ENCODE measurements at regions of chr9 and their contacts with region 1.

Region 1: DNA sequence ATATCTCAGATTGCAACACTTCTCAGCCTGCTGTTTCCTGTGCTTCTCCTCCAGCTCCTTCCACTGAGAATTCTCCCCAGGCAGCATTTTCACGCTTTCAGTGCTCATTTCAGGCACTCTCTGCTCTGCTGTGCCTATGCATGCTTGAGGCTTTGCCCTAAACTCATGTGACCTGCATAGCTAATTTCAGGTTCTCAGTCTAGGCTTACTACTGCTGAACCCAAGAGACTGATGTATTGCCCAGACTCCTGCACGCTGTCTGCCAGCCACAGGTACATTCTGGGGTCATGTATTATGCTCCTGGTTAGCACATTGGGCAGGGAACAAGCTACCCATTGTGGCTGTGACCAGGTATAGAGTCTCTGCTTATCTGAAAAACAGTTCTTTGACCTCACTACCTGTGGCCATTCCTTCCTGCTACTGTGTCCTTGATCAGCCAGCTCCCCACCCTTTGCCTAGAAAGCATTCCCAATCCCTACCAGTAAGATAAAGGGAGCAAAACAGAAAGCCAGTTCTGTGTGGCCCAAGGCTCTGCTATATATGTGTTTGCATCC is 34.7 kb downstream of the PIP5K1B start:
- DNase-seq: no peak
- H3K4me3 ChIP-seq: no peak overlapping the region
- H3K27ac ChIP-seq: no peak overlapping the region
- H3K4me1 ChIP-seq: no peaks in the 10 kb centered on the region
- H3K27me3 ChIP-seq: no peaks in the 10 kb centered on the region
- CTCF ChIP-seq: no peak
- EP300 ChIP-seq: no peak
- POLR2A ChIP-seq: no peak

Region 2: DNA sequence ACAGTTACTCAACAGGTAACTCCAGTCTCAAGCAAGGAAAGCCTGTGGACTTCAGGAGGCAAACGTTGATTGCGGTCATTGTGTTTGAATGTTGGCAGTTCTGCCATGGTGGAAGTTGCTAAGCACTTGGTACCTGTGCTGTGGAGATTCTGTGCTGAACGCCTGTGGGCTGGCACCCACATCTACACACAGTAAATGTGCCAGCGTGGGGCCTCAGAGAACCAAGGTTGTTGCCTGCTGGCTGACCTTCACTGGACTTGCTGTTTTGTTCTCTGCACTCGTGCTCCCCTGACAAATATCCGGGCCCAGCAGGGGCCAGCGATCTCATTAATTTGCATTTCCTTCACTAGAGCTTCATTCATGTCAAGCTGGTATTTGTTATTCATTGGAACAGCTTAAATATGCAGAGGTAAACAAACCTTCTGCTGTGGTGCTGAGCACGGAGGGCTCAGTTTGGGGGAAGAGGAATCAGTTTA is 132.4 kb after region 1 on chr9:
- intact Hi-C with region 1: loop called in 1 of 4 experiments (anchors 10 kb)
- DNase-seq: no peak
- H3K4me3 ChIP-seq: no peak overlapping the region
- H3K27ac ChIP-seq: no peak overlapping the region
- H3K4me1 ChIP-seq: peaks cover 1% of the 10 kb centered on the region
- H3K27me3 ChIP-seq: no peaks in the 10 kb centered on the region
- CTCF ChIP-seq: no peak
- EP300 ChIP-seq: no peak
- POLR2A ChIP-seq: no peak

Region 3: GRCh38 chr9:68912561-68912960 is 172.9 kb after region 1 on chr9:
- intact Hi-C with region 1: no loop called
- DNase-seq: no peak
- H3K4me3 ChIP-seq: no peak overlapping the region
- H3K27ac ChIP-seq: no peak overlapping the region
- H3K4me1 ChIP-seq: no peaks in the 10 kb centered on the region
- H3K27me3 ChIP-seq: no peaks in the 10 kb centered on the region
- CTCF ChIP-seq: no peak
- EP300 ChIP-seq: no peak
- POLR2A ChIP-seq: no peak

Measured in ovary (tissue), 10 donors.